Activated B cell treated with CpG ODN at 0.5 μM for 24 hours (primary cell): ENCODE measurements at regions of chr1 and their contacts with region 1.

Region 1: GRCh38 chr1:153572569-153573015 is 6.9 kb upstream of the S100A2 start:
- DNase-seq: peak; percentile 53
- ATAC-seq: peak; percentile 93
- H3K4me3 Mint-ChIP-seq: no peak overlapping the region
- H3K27ac Mint-ChIP-seq: peak overlapping the region; percentile 79
- H3K4me1 Mint-ChIP-seq: peaks cover 27% of the 10 kb centered on the region
- H3K27me3 Mint-ChIP-seq: peaks cover 8% of the 10 kb centered on the region
- CTCF ChIP-seq: no peak

Region 2: GRCh38 chr1:153352523-153352922 is 220.1 kb before region 1 on chr1:
- CTCF ChIA-PET with region 1: interaction called, 3 read pairs
- POLR2A ChIA-PET with region 1: no interaction called
- intact Hi-C with region 1: loop called (anchors 1 kb)
- DNase-seq: no peak
- ATAC-seq: peak; percentile 67
- H3K4me3 Mint-ChIP-seq: no peak overlapping the region
- H3K27ac Mint-ChIP-seq: no peak overlapping the region
- H3K4me1 Mint-ChIP-seq: peaks cover 6% of the 10 kb centered on the region
- H3K27me3 Mint-ChIP-seq: peaks cover 31% of the 10 kb centered on the region
- CTCF ChIP-seq: peak; percentile 91

Region 3: GRCh38 chr1:153532769-153533599 is 39.6 kb before region 1 on chr1:
- CTCF ChIA-PET with region 1: interaction called, 119 read pairs
- POLR2A ChIA-PET with region 1: interaction called, 44 read pairs
- intact Hi-C with region 1: loop called (anchors 1 kb)
- DNase-seq: peak; percentile 60
- ATAC-seq: peak; percentile 26
- H3K4me3 Mint-ChIP-seq: peak overlapping the region; percentile 48
- H3K27ac Mint-ChIP-seq: peak overlapping the region; percentile 13
- H3K4me1 Mint-ChIP-seq: peaks cover 45% of the 10 kb centered on the region
- H3K27me3 Mint-ChIP-seq: no peaks in the 10 kb centered on the region
- CTCF ChIP-seq: no peak

Region 4: GRCh38 chr1:153598309-153599172 is 25.9 kb after region 1 on chr1:
- CTCF ChIA-PET with region 1: interaction called, 9 read pairs
- POLR2A ChIA-PET with region 1: interaction called, 24 read pairs
- intact Hi-C with region 1: loop called (anchors 2 kb)
- DNase-seq: peak; percentile 57
- ATAC-seq: peak; percentile 92
- H3K4me3 Mint-ChIP-seq: peak overlapping the region; percentile 73
- H3K27ac Mint-ChIP-seq: peak overlapping the region; percentile 96
- H3K4me1 Mint-ChIP-seq: peaks cover 48% of the 10 kb centered on the region
- H3K27me3 Mint-ChIP-seq: no peaks in the 10 kb centered on the region
- CTCF ChIP-seq: no peak

Region 5: DNA sequence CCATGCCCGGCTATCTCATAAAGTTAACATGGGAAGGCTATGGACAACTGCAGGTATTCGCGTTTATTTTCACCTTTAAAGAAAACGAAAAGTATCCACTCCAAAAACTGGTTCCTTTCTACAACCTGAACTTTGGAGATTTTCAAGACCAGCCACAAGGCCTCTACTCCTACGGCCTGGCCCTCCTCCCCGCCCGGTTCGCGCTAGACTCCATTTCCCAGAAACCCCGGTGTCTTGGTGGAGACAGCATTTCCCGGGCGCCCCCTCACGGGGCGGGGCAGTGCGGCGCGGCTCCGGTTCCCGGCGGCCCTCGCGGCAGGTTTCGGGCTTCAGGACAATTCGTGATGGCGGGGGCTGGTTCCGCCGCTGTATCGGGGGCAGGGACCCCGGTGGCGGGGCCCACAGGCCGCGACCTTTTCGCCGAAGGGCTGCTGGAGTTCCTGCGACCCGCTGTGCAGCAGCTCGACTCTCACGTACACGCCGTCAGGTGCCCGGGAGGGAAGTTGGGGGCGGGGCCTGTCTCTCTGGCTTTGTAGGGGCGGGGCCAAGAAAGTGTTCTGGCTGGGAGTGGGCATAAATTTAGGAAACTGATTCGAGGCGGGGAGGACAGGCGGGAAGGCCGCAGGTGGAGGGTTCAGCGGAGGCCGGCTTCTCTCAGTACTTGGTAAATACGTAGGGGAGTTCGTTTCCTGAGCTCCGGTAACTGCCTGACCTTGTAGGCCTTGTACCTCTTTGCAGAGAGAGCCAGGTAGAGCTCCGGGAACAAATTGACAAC is 86.0 kb after region 1 on chr1 and contains the start of gene SNAPIN:
- CTCF ChIA-PET with region 1: interaction called, 9 read pairs
- POLR2A ChIA-PET with region 1: interaction called, 9 read pairs
- intact Hi-C with region 1: loop called (anchors 5 kb)
- DNase-seq: peak; percentile 94
- ATAC-seq: peak; percentile 99
- H3K4me3 Mint-ChIP-seq: peak within 1 kb of the TSS; percentile 96
- H3K27ac Mint-ChIP-seq: peak within 1 kb of the TSS; percentile 91
- H3K4me1 Mint-ChIP-seq: peaks cover 14% of the 10 kb centered on the region
- H3K27me3 Mint-ChIP-seq: no peaks in the 10 kb centered on the region
- CTCF ChIP-seq: no peak
- total RNA-seq, gene SNAPIN: 50.4 and 51.5 TPM in 2 replicates

Region 6: DNA sequence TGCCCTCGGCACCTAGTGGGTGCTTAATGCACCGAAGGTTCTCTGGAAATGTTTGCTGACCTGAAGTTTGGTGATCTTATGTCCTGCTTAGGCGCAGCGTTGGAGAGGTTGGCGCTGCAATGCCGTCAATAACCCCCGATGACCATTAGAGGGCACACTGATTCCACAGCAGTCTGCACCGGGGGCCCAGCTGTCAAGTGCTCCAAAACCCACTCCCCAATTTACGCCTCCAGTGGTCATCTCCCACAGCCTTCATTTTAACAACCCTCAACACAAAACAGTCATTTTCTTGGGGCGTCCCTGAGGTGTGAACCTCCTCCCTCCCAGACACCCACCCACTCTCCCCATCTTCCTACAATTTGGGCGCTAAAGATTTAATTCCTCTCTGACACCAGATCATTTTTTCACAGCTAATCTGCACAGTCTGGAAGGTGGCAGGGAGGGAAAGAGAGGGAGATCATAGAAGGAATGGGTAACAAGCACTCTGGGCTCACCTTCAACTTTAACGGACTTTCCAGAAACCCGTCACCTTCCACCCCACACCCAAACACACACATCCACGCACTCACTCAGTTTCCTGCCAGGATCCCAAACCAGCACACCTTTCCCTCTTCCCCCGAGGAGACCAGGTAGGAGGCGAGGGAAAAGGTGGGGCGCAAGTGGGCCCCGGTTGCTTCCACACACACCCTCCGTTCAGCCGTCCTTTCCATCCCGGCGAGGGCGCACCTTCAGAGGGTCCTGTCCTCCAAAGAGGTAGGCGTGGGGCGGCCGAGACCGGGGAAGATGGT is 105.3 kb after region 1 on chr1:
- CTCF ChIA-PET with region 1: interaction called, 9 read pairs
- POLR2A ChIA-PET with region 1: interaction called, 14 read pairs
- intact Hi-C with region 1: loop called (anchors 1 kb)
- DNase-seq: peak; percentile 40
- ATAC-seq: peak; percentile 67
- H3K4me3 Mint-ChIP-seq: peak overlapping the region; percentile 86
- H3K27ac Mint-ChIP-seq: no peak overlapping the region
- H3K4me1 Mint-ChIP-seq: peaks cover 21% of the 10 kb centered on the region
- H3K27me3 Mint-ChIP-seq: peaks cover 31% of the 10 kb centered on the region
- CTCF ChIP-seq: peak; percentile 73

Region 7: DNA sequence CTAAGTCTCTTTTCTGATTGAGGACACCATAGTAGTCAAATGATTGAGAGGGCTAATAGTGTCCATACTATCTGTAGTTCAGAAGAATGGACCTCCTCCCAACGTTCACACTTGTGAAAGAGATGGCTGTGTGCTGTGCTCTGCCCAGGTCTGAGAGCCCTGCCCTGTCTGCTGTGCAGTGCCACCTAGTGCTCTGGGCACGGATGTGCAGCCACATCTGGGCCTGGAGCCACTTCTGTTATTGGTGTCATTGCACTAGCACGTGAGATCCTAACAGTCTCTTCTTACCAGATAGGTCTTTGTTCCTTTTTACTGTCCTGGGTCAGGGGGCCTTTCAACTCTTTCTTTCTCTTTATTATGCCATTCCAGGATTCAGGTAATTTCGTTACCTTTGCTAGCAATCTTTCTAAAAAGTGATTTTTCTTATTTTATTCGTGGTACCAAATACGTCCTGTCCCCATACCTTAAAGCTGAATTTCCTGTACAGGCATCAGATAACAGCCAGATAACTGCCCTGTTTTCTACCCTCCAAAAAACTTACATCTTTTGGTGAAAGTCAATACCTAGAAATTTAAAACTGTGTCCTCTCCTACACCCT is 176.9 kb after region 1 on chr1:
- CTCF ChIA-PET with region 1: interaction called, 30 read pairs
- POLR2A ChIA-PET with region 1: no interaction called
- intact Hi-C with region 1: loop called (anchors 1 kb)
- DNase-seq: peak; percentile 60
- ATAC-seq: peak; percentile 100
- H3K4me3 Mint-ChIP-seq: no peak overlapping the region
- H3K27ac Mint-ChIP-seq: peak overlapping the region; percentile 3
- H3K4me1 Mint-ChIP-seq: peaks cover 14% of the 10 kb centered on the region
- H3K27me3 Mint-ChIP-seq: no peaks in the 10 kb centered on the region
- CTCF ChIP-seq: no peak